ENCODE measurements at regions of chr2 and their contacts with region 1.

Region 1: DNA sequence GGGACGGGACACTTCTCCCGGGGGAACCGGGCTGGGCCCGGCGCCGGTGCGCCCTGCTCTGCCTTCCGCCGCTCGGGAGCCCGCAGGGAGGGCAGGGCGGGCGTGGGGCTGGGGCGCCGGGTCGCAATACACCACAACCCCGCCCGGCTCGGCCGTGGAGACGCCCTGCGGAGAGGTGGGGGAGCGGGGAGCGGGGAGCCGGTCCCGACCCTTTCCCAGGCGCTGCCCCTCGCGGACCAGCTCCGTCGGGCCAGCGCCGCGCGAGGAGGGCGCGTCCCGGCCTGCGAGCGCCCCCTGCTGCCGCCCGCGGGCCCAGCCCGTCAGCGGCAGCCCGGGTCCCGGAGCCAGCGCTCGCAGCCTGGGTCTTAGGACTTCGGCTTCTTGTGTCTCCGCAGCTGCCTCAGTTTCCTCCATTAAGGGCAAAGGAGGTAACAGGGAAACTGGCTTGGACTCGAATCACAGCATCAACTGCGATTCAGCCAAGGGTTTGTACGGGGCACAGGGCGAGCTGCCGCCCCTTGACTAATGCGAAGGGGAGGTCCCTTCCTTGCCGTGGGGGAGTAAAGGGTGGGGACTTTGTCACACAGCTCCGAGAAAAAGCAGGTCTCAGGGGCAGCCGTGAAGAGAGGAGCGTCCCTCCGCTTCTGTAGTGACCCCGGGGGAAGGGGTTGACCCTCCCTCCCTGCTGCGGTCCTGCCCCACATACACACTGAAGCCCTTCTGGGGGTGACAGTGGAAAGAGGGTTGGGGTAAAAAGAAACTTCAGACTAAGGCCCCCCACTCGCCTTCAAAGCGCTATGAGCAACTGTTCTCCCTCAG is 717 bp upstream of the ADRA2B start:
- DNase-seq: peak; percentile 97
- H3K4me3 ChIP-seq: peak overlapping the region; percentile 44 to 54; a peak in 3 of 4 replicates
- H3K27ac ChIP-seq: no peak overlapping the region
- H3K4me1 ChIP-seq: peaks cover 0 to 12% of the 10 kb centered on the region in 2 experiments; a peak in 1 of 4 replicates
- H3K27me3 ChIP-seq: no peaks in the 10 kb centered on the region; the same call in 1 of the 2 replicates
- CTCF ChIP-seq: peak; percentile 71
- EP300 ChIP-seq: no peak
- RAD21 ChIP-seq: peak; percentile 74

Region 2: GRCh38 chr2:96024336-96025193 is 92.5 kb before region 1 on chr2:
- CTCF ChIA-PET with region 1: interaction called, 52 read pairs
- POLR2A ChIA-PET with region 1: no interaction called
- DNase-seq: peak; percentile 19
- H3K4me3 ChIP-seq: no peak overlapping the region
- H3K27ac ChIP-seq: no peak overlapping the region
- H3K4me1 ChIP-seq: no peaks in the 10 kb centered on the region
- H3K27me3 ChIP-seq: no peaks in the 10 kb centered on the region
- CTCF ChIP-seq: no peak
- EP300 ChIP-seq: no peak
- RAD21 ChIP-seq: no peak

Region 3: GRCh38 chr2:96091533-96092334 is 25.4 kb before region 1 on chr2:
- CTCF ChIA-PET with region 1: interaction called, 20 read pairs
- POLR2A ChIA-PET with region 1: no interaction called
- DNase-seq: no peak
- H3K4me3 ChIP-seq: no peak overlapping the region
- H3K27ac ChIP-seq: no peak overlapping the region; a peak in 1 of 4 replicates
- H3K4me1 ChIP-seq: peaks cover 0 to 34% of the 10 kb centered on the region in 2 experiments; a peak in 1 of 4 replicates
- H3K27me3 ChIP-seq: no peaks in the 10 kb centered on the region
- CTCF ChIP-seq: no peak
- EP300 ChIP-seq: no peak
- RAD21 ChIP-seq: no peak

Region 4: DNA sequence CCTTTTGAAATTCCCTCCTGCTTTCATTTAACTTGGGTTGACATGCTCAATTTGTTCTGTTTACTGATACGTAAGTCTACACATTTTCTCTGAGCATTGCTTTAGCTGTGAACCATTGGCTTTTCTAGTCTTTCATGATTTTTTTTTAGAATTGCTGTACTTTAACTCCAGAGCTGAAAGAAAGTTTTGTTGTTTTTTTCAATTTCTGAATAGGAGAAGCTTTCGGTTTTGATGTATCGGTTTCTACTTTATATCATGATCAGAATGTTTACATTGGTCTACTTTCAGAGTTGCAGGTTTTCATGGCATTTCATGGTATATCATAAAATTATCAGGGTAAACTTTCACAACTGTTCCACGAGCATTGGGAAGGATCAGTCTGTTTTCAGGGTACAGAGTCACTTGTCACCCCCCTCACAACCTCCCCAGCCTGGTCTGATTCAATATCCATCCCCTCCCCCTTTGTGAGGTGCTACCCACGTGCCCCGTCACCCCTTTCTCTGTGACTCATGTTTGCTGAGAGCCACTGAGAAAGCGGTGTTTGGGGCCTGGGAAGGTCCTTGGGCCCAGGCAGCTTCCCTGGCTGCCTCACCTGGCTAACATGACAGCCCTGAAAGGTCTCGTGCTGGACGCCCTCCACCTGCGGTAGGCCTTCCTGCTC is 14.2 kb after region 1 on chr2:
- CTCF ChIA-PET with region 1: interaction called, 44 read pairs
- POLR2A ChIA-PET with region 1: no interaction called
- DNase-seq: no peak
- H3K4me3 ChIP-seq: no peak overlapping the region
- H3K27ac ChIP-seq: no peak overlapping the region
- H3K4me1 ChIP-seq: peaks cover 0 to 4% of the 10 kb centered on the region in 2 experiments; a peak in 1 of 4 replicates
- H3K27me3 ChIP-seq: peaks cover 7% of the 10 kb centered on the region; the same call in 1 of the 2 replicates
- CTCF ChIP-seq: no peak
- EP300 ChIP-seq: no peak
- RAD21 ChIP-seq: no peak

Region 5: DNA sequence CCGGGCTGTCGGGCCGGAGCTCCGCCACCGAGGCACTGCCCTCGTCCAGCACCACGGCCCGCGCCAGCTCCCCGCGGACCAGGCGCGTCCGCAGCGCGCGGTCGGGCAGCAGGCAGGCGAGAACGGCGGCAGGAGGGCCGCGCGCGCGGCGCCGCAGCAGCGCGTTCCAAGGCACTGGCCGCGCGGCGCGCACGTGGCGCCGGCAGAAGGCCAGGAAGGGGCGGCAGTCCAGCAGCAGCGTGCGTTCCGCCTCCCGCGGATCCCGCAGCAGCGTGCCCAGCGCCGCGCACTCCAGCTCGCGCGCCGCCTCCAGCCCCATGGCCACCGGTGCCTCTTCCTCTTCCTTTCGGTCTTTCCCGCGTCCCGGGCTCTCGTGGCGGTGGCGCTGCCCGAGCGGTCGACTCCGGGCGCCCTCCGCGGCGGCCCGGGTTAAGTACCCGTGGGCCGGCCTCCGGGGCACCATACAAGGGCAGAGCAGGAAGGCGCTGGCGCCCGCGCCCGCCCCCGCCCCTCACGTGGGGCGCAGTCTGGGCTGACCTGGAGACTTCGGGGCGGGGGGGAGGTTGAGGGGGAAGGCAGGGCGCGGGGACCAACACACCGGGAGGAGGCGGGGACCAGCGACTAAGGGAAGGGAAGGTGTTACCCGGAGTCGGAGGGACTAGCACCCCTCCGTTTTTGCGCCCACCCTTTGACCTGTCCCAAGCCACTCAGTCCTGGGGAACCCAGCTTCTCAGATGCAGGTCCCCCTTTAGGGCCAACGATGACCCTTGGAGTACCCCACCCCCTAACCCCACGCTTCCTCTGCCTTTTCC is 28.2 kb after region 1 on chr2 and contains the start of gene DUSP2:
- CTCF ChIA-PET with region 1: interaction called, 27 read pairs
- POLR2A ChIA-PET with region 1: no interaction called
- DNase-seq: no peak
- H3K4me3 ChIP-seq: no peak within 1 kb of the TSS; a peak in 1 of 4 replicates
- H3K27ac ChIP-seq: peak within 1 kb of the TSS; percentile 88 to 95
- H3K4me1 ChIP-seq: peaks cover 33 to 58% of the 10 kb centered on the region in 2 experiments
- H3K27me3 ChIP-seq: no peaks in the 10 kb centered on the region
- CTCF ChIP-seq: no peak
- EP300 ChIP-seq: no peak
- RAD21 ChIP-seq: no peak
- polyA plus RNA-seq, gene DUSP2: 0.79 and 1.2 TPM in 2 replicates

Measured in SK-N-SH (cell line).